Caco-2 (cell line): ENCODE measurements at regions of chr2 and their contacts with region 1.

Region 1: GRCh38 chr2:136932700-136933099 is 167.4 kb downstream of the THSD7B start:
- DNase-seq: peak; percentile 55 to 63
- H3K4me3 ChIP-seq: no peak overlapping the region
- H3K4me3 Mint-ChIP-seq: no peak overlapping the region
- H3K27ac Mint-ChIP-seq: no peak overlapping the region
- H3K4me1 ChIP-seq: no peaks in the 10 kb centered on the region
- H3K4me1 Mint-ChIP-seq: no peaks in the 10 kb centered on the region
- H3K27me3 ChIP-seq: no peaks in the 10 kb centered on the region
- H3K27me3 Mint-ChIP-seq: no peaks in the 10 kb centered on the region
- CTCF ChIP-seq: peak; percentile 82 to 86

Region 2: GRCh38 chr2:137021763-137022162 is 89.1 kb after region 1 on chr2:
- CTCF ChIA-PET with region 1: no interaction called
- POLR2A ChIA-PET with region 1: no interaction called
- intact Hi-C with region 1: loop called (anchors 2 kb)
- DNase-seq: no peak
- H3K4me3 ChIP-seq: no peak overlapping the region
- H3K4me3 Mint-ChIP-seq: no peak overlapping the region
- H3K27ac Mint-ChIP-seq: no peak overlapping the region
- H3K4me1 ChIP-seq: 0 out of 2 replicates have a peak, but pooled peaks cover 5% of the 10 kb centered on the region
- H3K4me1 Mint-ChIP-seq: peaks cover 6% of the 10 kb centered on the region
- H3K27me3 ChIP-seq: no peaks in the 10 kb centered on the region
- H3K27me3 Mint-ChIP-seq: peaks cover 2% of the 10 kb centered on the region
- CTCF ChIP-seq: no peak

Region 3: DNA sequence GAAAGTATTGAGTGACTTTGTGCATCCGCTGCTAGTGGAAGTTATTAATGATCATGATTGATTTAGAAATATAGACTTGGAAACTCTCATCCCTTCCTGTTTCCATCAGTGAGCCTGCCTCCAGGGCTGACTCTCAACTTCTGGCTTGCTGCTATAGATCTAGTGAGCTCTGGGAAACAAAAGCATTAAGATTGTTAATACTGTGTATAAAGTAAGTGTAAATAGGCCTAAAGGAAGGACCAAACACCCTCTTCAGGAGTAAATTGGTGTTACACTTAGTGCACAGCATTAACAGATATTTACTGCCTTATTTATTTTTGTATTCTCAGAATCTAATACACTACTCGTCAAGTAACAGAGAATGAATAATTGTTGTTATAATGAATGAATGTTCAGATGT is 118.2 kb after region 1 on chr2:
- CTCF ChIA-PET with region 1: interaction called, 8 read pairs
- POLR2A ChIA-PET with region 1: no interaction called
- intact Hi-C with region 1: loop called (anchors 1 kb)
- DNase-seq: peak in 1 of 2 experiments; percentile 9
- H3K4me3 ChIP-seq: no peak overlapping the region
- H3K4me3 Mint-ChIP-seq: no peak overlapping the region
- H3K27ac Mint-ChIP-seq: no peak overlapping the region
- H3K4me1 ChIP-seq: peaks cover 14% of the 10 kb centered on the region
- H3K4me1 Mint-ChIP-seq: peaks cover 12% of the 10 kb centered on the region
- H3K27me3 ChIP-seq: no peaks in the 10 kb centered on the region
- H3K27me3 Mint-ChIP-seq: no peaks in the 10 kb centered on the region
- CTCF ChIP-seq: peak; percentile 48 to 51

Region 4: DNA sequence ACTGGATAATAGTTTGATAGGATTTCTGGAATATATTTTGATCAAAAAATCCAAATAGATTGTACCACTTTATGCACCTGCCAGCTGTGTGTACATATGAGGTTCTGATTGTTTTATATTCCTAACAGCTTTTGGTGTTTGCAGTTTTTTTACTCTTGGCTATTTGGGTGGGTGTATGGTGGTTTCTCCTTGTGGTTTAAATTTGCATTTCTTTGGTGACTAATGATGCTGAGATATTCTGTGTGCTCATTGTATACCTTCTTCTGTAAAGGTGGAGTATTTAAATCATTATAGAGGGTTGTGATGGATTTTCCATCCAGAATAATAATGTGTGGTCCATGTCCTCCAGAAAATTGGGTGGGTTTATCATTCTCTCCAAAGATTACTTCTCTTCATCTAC is 205.6 kb after region 1 on chr2:
- CTCF ChIA-PET with region 1: no interaction called
- POLR2A ChIA-PET with region 1: no interaction called
- intact Hi-C with region 1: no loop called
- DNase-seq: no peak
- H3K4me3 ChIP-seq: no peak overlapping the region
- H3K4me3 Mint-ChIP-seq: no peak overlapping the region
- H3K27ac Mint-ChIP-seq: no peak overlapping the region
- H3K4me1 ChIP-seq: no peaks in the 10 kb centered on the region
- H3K4me1 Mint-ChIP-seq: no peaks in the 10 kb centered on the region
- H3K27me3 ChIP-seq: no peaks in the 10 kb centered on the region
- H3K27me3 Mint-ChIP-seq: no peaks in the 10 kb centered on the region
- CTCF ChIP-seq: no peak

Region 5: GRCh38 chr2:137173463-137173862 is 240.8 kb after region 1 on chr2:
- CTCF ChIA-PET with region 1: no interaction called
- POLR2A ChIA-PET with region 1: no interaction called
- intact Hi-C with region 1: loop called (anchors 1 kb)
- DNase-seq: peak; percentile 42 to 54
- H3K4me3 ChIP-seq: no peak overlapping the region
- H3K4me3 Mint-ChIP-seq: no peak overlapping the region
- H3K27ac Mint-ChIP-seq: peak overlapping the region; percentile 42
- H3K4me1 ChIP-seq: peaks cover 19% of the 10 kb centered on the region
- H3K4me1 Mint-ChIP-seq: peaks cover 19% of the 10 kb centered on the region
- H3K27me3 ChIP-seq: no peaks in the 10 kb centered on the region
- H3K27me3 Mint-ChIP-seq: no peaks in the 10 kb centered on the region
- CTCF ChIP-seq: peak; percentile 47 to 49

Region 6: DNA sequence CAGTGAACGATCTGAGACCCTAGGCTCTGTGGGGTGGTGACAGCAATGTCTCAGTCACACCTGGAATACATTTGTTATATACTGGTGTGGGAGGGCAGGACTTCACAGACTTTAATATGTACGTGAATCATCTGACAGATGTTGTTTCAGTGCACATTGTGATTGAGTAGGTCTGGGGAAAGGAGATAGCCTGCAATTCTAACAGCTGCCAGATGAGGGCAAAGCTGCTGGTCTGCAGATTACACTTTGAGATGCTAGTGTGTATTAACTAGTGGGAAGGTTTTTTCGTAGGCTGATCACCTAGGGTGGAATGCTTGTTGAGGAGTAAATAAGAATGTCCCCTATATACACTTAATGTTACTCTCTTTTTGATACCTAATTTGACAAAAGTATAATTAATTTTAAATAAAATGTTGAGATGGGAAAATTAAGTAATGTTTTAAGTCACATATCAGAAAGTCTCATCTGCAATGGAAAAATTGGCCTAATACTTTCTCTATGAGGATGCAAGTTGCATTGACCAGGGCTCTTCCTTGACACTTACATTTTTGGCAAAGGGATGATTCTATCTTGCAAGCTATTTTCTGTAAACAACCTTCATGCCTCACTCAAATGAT is 534.7 kb after region 1 on chr2:
- CTCF ChIA-PET with region 1: no interaction called
- POLR2A ChIA-PET with region 1: no interaction called
- intact Hi-C with region 1: loop called (anchors 5 kb)
- DNase-seq: peak; percentile 57 to 65
- H3K4me3 ChIP-seq: no peak overlapping the region
- H3K4me3 Mint-ChIP-seq: no peak overlapping the region
- H3K27ac Mint-ChIP-seq: no peak overlapping the region
- H3K4me1 ChIP-seq: peaks cover 9% of the 10 kb centered on the region; the same call in 1 of the 2 replicates
- H3K4me1 Mint-ChIP-seq: no peaks in the 10 kb centered on the region
- H3K27me3 ChIP-seq: no peaks in the 10 kb centered on the region
- H3K27me3 Mint-ChIP-seq: no peaks in the 10 kb centered on the region
- CTCF ChIP-seq: peak; percentile 73 to 84

Region 7: DNA sequence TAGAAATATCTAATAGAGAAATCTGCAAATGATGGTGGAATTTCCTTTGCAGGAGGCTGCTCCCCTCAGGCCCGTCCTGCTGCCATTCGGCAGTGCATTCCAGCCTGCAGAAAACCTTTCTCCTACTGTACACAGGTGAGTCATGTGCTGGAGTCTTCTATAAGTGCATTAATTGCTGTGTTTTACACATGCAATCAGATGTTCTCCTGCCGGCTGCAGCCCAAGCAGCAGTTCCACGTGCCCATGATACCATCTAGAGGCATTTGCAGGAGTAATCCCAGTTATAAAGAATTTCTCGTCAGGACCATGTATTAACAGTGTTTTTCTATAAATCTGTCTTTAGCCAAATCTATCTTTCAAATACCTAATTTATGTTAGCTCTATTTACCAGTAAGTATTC is 726.9 kb after region 1 on chr2:
- CTCF ChIA-PET with region 1: no interaction called
- POLR2A ChIA-PET with region 1: no interaction called
- intact Hi-C with region 1: loop called (anchors 1 kb)
- DNase-seq: peak; percentile 17 to 42
- H3K4me3 ChIP-seq: no peak overlapping the region
- H3K4me3 Mint-ChIP-seq: no peak overlapping the region
- H3K27ac Mint-ChIP-seq: no peak overlapping the region
- H3K4me1 ChIP-seq: no peaks in the 10 kb centered on the region
- H3K4me1 Mint-ChIP-seq: no peaks in the 10 kb centered on the region
- H3K27me3 ChIP-seq: no peaks in the 10 kb centered on the region
- H3K27me3 Mint-ChIP-seq: no peaks in the 10 kb centered on the region
- CTCF ChIP-seq: peak in 1 of 2 experiments; percentile 32